Dorsolateral prefrontal cortex (tissue), 120 donors: ENCODE measurements at regions of chr12 and their contacts with region 1.

Region 1: DNA sequence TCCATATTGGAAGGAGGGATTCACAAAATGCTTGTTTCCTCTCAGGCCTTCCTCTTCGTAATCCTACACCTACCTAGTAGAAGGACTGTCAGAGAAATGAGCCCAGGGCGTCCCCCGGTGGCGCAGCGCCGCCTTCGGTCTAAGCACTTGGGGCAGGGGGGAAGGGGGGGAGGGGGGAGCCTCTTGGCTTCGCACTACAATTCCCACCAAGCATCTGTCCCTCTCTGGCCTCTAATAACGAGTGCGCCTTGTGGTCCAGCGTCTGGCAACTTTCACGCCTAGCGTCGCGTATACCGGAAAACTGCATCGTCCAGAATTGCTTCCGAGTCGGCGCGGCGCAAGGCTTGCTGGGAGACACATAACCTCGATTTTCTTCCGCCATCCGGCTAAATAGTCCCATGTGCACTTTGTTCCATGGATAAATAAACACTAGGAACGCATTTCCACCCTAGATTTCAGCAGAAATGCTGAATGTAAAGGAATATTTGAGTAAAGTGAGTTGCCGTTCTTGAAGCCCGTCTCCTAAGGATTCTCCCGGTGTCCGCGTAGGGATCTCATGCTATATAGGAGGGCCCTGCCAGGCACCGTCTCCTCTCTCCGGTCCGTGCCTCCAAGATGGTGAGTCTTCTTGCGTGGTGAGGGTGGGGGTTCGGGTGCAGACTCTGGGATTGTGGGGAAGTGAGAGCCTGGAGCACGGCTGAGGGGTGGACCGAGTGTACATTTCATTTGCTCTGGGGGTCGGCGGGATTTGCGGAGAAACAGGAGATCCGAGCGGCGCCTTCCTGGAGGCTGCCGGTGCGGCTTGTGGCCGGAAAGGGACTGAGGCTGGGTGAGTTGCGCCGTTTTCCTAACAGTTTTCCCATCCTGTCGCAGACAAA is at the start of gene RPS26:
- DNase-seq: peak; percentile 81 to 96 (median 92)
- H3K4me3 ChIP-seq: peak within 1 kb of the TSS; percentile 56 to 99 (median 87)
- H3K27ac ChIP-seq: peak within 1 kb of the TSS; percentile 68 to 100 (median 97)
- H3K27me3 ChIP-seq: no peaks in the 10 kb centered on the region
- CTCF ChIP-seq: peak in 55 of 56 donors; percentile 32 to 74 (median 57)
- total RNA-seq, gene RPS26: 6.6 to 65.3 (median 18.5) TPM

Region 2: DNA sequence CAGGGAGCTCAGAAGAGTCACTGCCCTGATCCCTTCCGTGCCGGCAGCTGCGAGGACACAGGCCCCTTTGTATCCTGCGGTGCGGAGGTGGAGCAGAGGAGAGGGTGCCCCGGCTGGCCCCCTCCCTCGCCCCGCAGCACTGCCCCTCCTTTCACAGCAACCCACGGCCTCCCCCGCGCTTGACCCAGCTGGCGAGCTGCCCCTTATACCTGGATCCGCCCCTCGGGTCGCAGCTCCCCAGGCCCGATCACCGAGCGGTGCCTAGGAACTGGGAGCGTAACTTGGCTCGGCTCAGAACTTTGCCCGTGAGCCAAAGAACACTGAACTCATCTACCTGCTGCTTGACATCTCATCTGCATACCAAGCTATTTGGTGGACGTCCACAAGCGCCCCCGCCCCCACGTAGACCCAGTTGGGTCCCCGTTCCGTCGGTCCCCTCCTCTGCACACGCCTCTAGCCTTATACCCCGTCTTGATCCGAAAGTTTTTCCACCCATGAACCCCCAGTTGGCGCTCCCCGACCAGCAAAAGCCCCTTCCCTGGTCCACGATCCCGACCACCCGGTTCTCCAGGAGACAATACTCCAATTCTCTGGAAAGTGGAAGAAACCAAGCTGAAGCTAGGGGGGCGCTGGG is 211.7 kb before region 1 on chr12:
- intact Hi-C with region 1: loop called in 1 of 2 experiments (anchors 5 kb)
- DNase-seq: peak in 8 of 10 donors; percentile 48 to 72 (median 59)
- H3K4me3 ChIP-seq: peak overlapping the region; percentile 68 to 99 (median 93)
- H3K27ac ChIP-seq: peak overlapping the region; percentile 82 to 100 (median 98)
- H3K27me3 ChIP-seq: no peaks in the 10 kb centered on the region
- CTCF ChIP-seq: peak in 2 of 56 donors; percentile 6 to 23

Region 3: GRCh38 chr12:56078990-56079664 is 37.3 kb after region 1 on chr12:
- intact Hi-C with region 1: loop called (anchors 2 to 5 kb)
- DNase-seq: peak; percentile 31 to 90 (median 84)
- H3K4me3 ChIP-seq: peak overlapping the region; percentile 33 to 94 (median 73)
- H3K27ac ChIP-seq: peak overlapping the region in 58 of 59 donors; percentile 50 to 99 (median 95)
- H3K27me3 ChIP-seq: peaks cover 0 to 26% (median 0%) of the 10 kb centered on the region in 45 donors
- CTCF ChIP-seq: peak; percentile 25 to 83 (median 65)

Region 4: GRCh38 chr12:56117778-56118687 is 76.2 kb after region 1 on chr12 and contains the start of gene ZC3H10:
- intact Hi-C with region 1: loop called (anchors 2 kb)
- DNase-seq: peak; percentile 94 to 99 (median 98)
- H3K4me3 ChIP-seq: peak within 1 kb of the TSS; percentile 59 to 98 (median 85)
- H3K27ac ChIP-seq: peak within 1 kb of the TSS; percentile 64 to 99 (median 96)
- H3K27me3 ChIP-seq: no peaks in the 10 kb centered on the region
- CTCF ChIP-seq: peak in 55 of 56 donors; percentile 34 to 85 (median 68)
- total RNA-seq, gene ZC3H10: 4.3 to 14.7 (median 8.4) TPM

Region 5: DNA sequence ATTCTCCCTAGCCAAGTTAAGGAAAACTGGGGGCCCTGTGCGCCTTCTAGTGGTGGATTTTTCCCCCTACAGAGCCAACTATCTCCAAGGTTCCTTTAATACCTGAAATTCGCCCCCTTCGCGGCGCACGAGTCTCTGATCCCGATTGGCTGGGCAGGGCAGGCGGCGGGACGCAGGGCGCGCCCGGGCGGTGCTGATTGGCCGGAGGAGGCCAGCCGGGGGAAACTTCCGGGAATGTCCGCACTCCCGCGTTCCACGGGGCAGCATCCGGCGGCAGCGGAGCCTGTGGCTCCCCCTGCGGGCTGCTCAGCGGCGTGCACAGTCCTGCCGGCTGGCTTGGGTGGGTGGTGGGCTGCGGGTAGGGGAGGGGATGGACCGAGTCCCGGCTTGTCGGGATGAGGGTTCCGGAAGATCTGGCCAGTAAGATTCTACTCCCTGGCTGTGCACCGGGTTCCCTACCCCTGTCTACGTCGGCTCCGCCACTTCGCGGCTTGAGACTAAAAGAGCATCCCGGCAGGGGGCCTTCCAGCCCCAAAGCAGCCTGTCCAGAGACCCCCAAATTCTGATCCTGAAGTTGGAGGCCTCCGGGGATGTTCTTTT is 182.4 kb after region 1 on chr12 and contains the start of gene NABP2:
- intact Hi-C with region 1: loop called in 1 of 2 experiments (anchors 10 kb)
- DNase-seq: peak; percentile 96 to 98 (median 98)
- H3K4me3 ChIP-seq: peak within 1 kb of the TSS; percentile 55 to 95 (median 78)
- H3K27ac ChIP-seq: peak within 1 kb of the TSS; percentile 52 to 99 (median 89)
- H3K27me3 ChIP-seq: no peaks in the 10 kb centered on the region
- CTCF ChIP-seq: peak in 55 of 56 donors; percentile 80 to 99 (median 93)
- total RNA-seq, gene NABP2: 32.1 to 66.4 (median 49.1) TPM